ENCODE measurements at regions of chr11 and their contacts with region 1.

Region 1: DNA sequence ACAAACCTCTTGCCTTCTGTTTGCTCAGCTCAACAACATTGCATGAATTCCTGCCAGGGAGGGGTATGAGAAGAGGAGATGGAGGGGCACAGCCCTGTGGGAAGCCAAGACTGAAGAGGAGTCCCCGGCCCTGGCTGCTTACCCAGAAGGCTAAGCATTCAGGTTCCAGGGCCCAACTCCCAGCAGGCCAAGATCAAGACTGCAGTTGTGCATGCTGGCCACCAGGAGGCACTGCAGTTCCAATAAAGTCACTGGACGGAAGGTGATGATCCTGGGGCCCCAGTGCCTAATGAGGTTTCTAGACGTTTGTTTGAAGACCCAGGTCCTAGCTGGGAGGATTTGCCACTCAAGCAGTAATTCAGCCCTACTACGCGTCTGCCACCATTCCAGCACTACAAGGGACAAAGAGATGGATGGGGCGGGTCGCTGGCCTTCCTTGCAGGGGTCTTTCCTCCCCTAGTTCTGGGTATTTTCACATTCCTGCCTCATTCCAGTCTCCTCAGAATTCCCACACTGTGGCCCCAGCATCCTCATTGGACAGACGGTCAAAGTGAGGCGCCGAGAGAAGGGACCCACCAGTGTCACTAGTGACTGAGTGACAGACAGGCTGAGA is 23.6 kb downstream of the ALX4 start:
- DNase-seq: peak; percentile 80
- ATAC-seq: peak; percentile 85
- H3K4me3 Mint-ChIP-seq: no peak overlapping the region
- H3K27ac Mint-ChIP-seq: no peak overlapping the region
- H3K4me1 Mint-ChIP-seq: no peaks in the 10 kb centered on the region
- H3K27me3 Mint-ChIP-seq: peaks cover 2% of the 10 kb centered on the region

Region 2: DNA sequence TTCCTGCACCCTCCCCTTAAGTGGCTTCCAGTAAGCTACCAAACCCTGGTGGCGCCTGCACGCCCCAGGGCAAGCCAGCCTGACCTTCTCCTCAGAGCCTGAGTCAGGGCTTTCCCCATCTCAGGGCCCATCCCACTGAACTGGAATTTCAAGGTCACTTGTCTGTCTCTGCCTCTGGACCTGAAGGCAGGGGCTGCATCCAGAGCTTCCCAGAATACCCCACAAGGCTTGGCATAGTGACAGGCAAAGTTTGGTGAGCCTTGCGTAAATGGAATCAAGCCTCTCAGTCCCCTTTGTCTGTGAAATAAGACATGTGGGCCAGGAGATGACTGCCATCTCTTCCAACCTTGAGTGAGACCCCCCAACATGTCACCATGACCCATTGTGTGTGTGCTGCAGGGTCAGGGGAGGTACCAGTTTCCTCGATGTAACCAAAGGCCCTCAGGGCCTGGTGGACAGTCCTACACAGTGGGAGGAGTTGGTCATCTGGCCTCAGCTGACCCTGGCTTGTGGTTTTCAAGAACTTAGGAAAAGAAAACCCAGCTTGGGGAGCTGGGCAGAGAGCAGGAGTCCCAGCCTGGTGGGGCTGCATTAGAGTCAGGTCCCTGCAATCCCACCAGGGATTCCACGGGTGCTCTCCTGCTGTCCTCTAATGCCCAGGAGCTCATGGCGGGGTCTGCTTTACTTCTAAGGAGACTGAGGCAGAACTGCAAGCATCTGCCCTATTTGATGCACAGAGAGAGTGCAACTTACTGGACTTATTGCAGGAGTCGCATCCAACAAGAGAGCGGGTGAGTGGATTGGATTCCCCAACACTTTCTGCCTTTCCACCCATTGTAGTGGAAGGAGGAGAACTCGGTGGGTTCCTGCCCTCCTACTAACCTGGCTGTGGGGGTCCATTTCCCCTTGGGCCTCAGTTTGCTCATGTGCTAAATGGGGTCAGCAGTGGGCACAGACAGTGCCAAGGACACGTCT is 14.8 kb after region 1 on chr11:
- CTCF ChIA-PET with region 1: interaction called, 10 read pairs
- POLR2A ChIA-PET with region 1: no interaction called
- intact Hi-C with region 1: no loop called
- DNase-seq: no peak
- ATAC-seq: no peak
- H3K4me3 Mint-ChIP-seq: no peak overlapping the region
- H3K27ac Mint-ChIP-seq: no peak overlapping the region
- H3K4me1 Mint-ChIP-seq: peaks cover 19% of the 10 kb centered on the region
- H3K27me3 Mint-ChIP-seq: peaks cover 51% of the 10 kb centered on the region

Region 3: DNA sequence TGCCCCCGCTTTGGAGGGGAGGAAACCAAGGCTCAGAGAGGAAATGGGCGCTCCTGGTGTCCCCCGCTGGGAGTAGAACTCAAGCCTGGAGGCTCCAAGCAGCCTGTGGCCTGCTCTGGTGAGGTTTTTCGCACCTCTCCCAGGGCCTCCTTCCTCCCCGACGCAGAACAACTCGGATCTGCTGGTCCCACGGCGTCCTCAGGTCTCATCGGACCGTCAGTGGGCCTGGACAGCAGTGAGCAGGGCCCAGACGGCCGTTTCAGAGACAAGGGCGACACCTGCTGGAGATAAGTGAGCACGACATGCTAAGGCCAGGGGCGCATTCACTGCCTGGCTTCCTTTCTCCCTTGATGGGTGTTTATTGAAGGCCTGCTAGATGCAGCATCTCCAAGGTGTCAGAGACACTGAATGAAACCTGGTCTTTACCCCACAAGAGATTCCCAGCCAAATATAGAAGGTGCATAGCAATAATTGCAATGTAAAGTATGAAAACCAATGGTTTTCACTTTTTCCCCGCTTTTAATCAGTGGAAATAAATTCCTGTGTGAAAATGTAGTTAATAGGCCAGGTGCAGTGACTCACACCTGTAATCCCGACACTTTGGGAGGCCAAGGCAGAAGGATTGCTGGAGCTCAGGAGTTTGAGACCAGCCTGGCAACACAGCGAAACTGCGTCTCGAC is 252.1 kb after region 1 on chr11:
- CTCF ChIA-PET with region 1: interaction called, 13 read pairs
- POLR2A ChIA-PET with region 1: no interaction called
- intact Hi-C with region 1: loop called (anchors 1 kb)
- DNase-seq: peak; percentile 84
- ATAC-seq: peak; percentile 95
- H3K4me3 Mint-ChIP-seq: no peak overlapping the region
- H3K27ac Mint-ChIP-seq: no peak overlapping the region
- H3K4me1 Mint-ChIP-seq: no peaks in the 10 kb centered on the region
- H3K27me3 Mint-ChIP-seq: no peaks in the 10 kb centered on the region

Region 4: GRCh38 chr11:44893846-44894617 is 607.7 kb after region 1 on chr11:
- CTCF ChIA-PET with region 1: no interaction called
- POLR2A ChIA-PET with region 1: no interaction called
- intact Hi-C with region 1: loop called in 1 of 2 experiments (anchors 10 kb)
- DNase-seq: peak; percentile 79
- ATAC-seq: peak; percentile 93
- H3K4me3 Mint-ChIP-seq: no peak overlapping the region
- H3K27ac Mint-ChIP-seq: no peak overlapping the region
- H3K4me1 Mint-ChIP-seq: peaks cover 1% of the 10 kb centered on the region
- H3K27me3 Mint-ChIP-seq: no peaks in the 10 kb centered on the region